ENCODE measurements at regions of chr14 and their contacts with region 1.

Region 1: DNA sequence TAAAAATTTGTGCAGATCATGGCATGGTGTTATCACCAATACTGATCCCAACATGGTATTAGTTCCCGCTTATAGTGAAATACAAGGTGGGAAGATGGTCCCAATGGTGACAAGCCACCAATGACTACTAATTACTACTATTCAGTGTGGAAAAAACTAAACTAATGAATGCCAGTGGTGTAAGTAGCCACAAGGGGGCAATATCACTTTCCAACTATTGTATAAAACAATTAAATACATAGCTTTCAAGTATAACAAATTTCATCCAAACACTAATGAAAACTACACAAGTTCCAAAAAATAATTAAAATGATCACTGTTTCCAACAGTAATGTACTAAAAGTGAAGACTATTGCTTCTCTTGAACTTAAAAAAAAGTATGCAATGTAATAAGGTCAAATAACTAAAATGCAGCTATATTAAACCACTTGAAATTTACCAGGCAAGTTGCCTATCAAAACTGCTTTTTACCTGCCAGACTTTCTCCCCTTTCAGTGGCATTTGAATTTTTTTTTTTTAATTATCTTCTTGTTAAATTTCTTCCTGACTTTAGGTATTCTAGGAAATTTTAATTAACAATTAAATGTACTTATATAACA is 58.0 kb downstream of the PAPLN start:
- DNase-seq: peak in 4 of 5 donors; percentile 30 to 46 (median 39)
- H3K4me3 ChIP-seq: no peak overlapping the region
- H3K4me3 Mint-ChIP-seq: no peak overlapping the region
- H3K27ac ChIP-seq: no peak overlapping the region
- H3K27ac Mint-ChIP-seq: peak overlapping the region in 1 of 7 donors; percentile 29
- H3K4me1 ChIP-seq: peaks cover 1% of the 10 kb centered on the region
- H3K4me1 Mint-ChIP-seq: peaks cover 0 to 7% (median 3%) of the 10 kb centered on the region in 4 donors
- H3K27me3 ChIP-seq: no peaks in the 10 kb centered on the region
- H3K27me3 Mint-ChIP-seq: no peaks in the 10 kb centered on the region

Region 2: DNA sequence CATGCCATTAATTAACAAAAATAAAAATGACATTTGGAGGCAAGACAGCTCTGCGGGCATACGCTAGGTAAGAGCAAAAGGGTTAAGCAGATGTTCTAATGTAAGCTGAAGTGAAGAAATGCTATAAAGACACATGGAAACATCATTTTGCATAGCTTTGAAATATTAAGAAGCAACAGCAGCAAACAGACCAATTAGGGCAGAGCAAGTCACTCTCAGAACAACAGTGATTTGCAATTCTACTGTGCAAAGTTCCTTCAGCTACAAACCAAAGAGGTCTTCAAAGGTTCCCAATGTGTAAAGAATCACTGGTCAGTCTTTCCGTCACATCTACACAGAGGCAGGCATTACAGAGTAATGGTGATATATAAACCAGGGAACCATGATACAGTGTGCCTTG is 10.2 kb after region 1 on chr14:
- CTCF ChIA-PET with region 1: interaction called, 19 read pairs
- POLR2A ChIA-PET with region 1: no interaction called
- intact Hi-C with region 1: no loop called
- DNase-seq: no peak
- H3K4me3 ChIP-seq: no peak overlapping the region
- H3K4me3 Mint-ChIP-seq: no peak overlapping the region
- H3K27ac ChIP-seq: no peak overlapping the region
- H3K27ac Mint-ChIP-seq: no peak overlapping the region
- H3K4me1 ChIP-seq: no peaks in the 10 kb centered on the region
- H3K4me1 Mint-ChIP-seq: peaks cover 0 to 5% (median 3%) of the 10 kb centered on the region in 4 donors
- H3K27me3 ChIP-seq: no peaks in the 10 kb centered on the region
- H3K27me3 Mint-ChIP-seq: no peaks in the 10 kb centered on the region

Region 3: DNA sequence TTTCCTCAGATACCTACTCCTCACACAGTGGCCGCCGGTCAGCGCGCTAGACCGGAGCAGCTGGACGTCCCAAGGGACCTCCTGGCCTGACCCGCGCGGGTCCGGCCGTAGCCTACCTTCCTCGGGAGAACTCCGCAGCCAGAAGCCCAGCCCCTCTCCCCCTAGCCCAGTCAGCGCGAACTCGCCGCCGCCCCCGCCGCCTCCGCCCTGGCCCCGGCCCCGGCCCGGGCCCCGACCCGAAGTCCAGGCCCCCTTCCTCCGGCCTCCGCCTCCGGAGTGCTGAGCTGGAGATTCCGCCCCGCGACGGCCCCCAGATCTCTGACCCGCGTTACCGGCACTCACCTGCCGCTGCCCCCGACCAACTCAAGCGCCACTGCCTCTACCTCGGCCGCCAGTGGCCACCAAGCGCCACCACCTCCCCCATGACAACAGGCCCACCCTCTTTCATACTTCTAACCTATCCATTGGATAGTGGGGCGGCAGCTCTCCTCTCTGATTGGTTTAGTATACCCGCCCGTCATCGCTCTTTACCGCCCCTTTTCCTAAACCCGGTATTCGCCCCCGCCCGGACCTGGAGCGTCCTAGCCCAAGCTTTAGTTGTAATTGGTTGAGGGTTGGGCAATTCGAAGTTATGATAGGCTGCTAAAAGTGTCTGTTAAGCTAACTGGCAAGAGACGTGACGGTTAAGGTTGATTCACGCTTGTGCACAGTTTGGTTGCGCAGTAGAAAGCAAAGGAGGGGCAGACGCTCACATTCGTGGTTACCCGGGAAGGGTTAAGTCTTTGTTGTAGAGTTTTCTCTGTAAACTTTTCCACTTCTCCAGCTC is 163.1 kb after region 1 on chr14 and contains the start of gene NUMB:
- CTCF ChIA-PET with region 1: interaction called, 12 read pairs
- POLR2A ChIA-PET with region 1: no interaction called
- intact Hi-C with region 1: no loop called
- DNase-seq: peak; percentile 97 to 99 (median 98)
- H3K4me3 ChIP-seq: peak within 1 kb of the TSS; percentile 58 to 75
- H3K4me3 Mint-ChIP-seq: peak within 1 kb of the TSS; percentile 95 to 100 (median 98)
- H3K27ac ChIP-seq: peak within 1 kb of the TSS; percentile 86
- H3K27ac Mint-ChIP-seq: peak within 1 kb of the TSS; percentile 77 to 99 (median 97)
- H3K4me1 ChIP-seq: peaks cover 41% of the 10 kb centered on the region
- H3K4me1 Mint-ChIP-seq: peaks cover 25 to 46% (median 34%) of the 10 kb centered on the region in 4 donors
- H3K27me3 ChIP-seq: no peaks in the 10 kb centered on the region
- H3K27me3 Mint-ChIP-seq: no peaks in the 10 kb centered on the region
- total RNA-seq, gene NUMB: 45.3 to 47.3 TPM

Region 4: GRCh38 chr14:73613046-73613383 is 317.7 kb after region 1 on chr14:
- CTCF ChIA-PET with region 1: no interaction called
- POLR2A ChIA-PET with region 1: no interaction called
- intact Hi-C with region 1: no loop called
- DNase-seq: no peak
- H3K4me3 ChIP-seq: peak overlapping the region; percentile 28 to 82
- H3K4me3 Mint-ChIP-seq: peak overlapping the region; percentile 85 to 90 (median 87)
- H3K27ac ChIP-seq: peak overlapping the region; percentile 40
- H3K27ac Mint-ChIP-seq: peak overlapping the region; percentile 46 to 91 (median 75)
- H3K4me1 ChIP-seq: peaks cover 3% of the 10 kb centered on the region
- H3K4me1 Mint-ChIP-seq: peaks cover 0 to 6% (median 3%) of the 10 kb centered on the region in 4 donors
- H3K27me3 ChIP-seq: no peaks in the 10 kb centered on the region
- H3K27me3 Mint-ChIP-seq: no peaks in the 10 kb centered on the region

Measured in CD4-positive, alpha-beta memory T cell (primary cell).